Activated CD4-positive, alpha-beta T cell treated with anti-CD3 and anti-CD28 coated beads, Interleukin-2, amount 10 ng/mL, durations not matched to agents 24 days and 14 days (primary cell): ENCODE measurements at regions of chr18 and their contacts with region 1.

Region 1: DNA sequence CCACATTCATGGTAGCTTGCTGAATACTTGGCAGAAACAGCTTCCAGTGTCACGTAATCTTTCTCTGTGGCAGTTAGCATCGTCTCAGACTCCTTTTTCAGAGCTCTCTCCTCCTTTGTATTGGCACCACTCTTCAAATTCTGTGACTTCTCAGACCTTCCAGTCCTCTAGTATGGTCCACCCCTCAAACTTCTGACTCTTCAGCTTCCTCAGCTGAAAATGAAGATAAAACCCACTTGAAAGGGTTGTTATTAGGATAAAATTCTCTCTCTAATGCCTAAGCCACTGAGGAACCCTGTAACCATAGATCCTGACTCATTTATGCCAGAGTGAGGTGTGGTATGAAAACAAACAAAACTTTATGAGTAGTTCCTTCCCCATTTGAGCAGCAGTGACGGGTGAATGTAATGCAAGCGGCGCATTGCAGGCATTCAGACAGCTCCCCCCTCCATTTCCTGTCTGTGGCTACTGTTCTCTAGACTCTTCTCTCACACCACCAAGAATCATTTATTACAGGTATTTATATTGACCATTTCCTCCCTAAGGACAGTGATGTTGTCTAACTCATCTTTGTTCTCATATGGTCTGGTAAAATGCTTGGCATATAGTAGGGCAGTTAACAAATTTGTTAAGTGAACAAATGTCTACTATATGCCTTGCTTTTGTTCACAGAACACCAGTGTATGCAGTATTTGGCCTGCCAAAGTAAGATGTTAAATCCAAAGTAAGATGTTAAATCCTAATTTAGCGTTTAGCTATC is 35.3 kb downstream of the GALNT1 start:
- DNase-seq: peak; percentile 85
- H3K4me3 Mint-ChIP-seq: no peak overlapping the region
- H3K27ac Mint-ChIP-seq: no peak overlapping the region
- H3K4me1 Mint-ChIP-seq: peaks cover 2% of the 10 kb centered on the region
- H3K27me3 Mint-ChIP-seq: no peaks in the 10 kb centered on the region

Region 2: GRCh38 chr18:35407871-35408481 is 208.9 kb before region 1 on chr18:
- intact Hi-C with region 1: loop called (anchors 5 kb)
- DNase-seq: peak; percentile 83
- H3K4me3 Mint-ChIP-seq: no peak overlapping the region
- H3K27ac Mint-ChIP-seq: no peak overlapping the region
- H3K4me1 Mint-ChIP-seq: peaks cover 12% of the 10 kb centered on the region
- H3K27me3 Mint-ChIP-seq: peaks cover 5% of the 10 kb centered on the region

Region 3: GRCh38 chr18:35484034-35484433 is 132.8 kb before region 1 on chr18:
- intact Hi-C with region 1: loop called (anchors 2 kb)
- DNase-seq: no peak
- H3K4me3 Mint-ChIP-seq: no peak overlapping the region
- H3K27ac Mint-ChIP-seq: peak overlapping the region; percentile 16
- H3K4me1 Mint-ChIP-seq: peaks cover 16% of the 10 kb centered on the region
- H3K27me3 Mint-ChIP-seq: no peaks in the 10 kb centered on the region

Region 4: DNA sequence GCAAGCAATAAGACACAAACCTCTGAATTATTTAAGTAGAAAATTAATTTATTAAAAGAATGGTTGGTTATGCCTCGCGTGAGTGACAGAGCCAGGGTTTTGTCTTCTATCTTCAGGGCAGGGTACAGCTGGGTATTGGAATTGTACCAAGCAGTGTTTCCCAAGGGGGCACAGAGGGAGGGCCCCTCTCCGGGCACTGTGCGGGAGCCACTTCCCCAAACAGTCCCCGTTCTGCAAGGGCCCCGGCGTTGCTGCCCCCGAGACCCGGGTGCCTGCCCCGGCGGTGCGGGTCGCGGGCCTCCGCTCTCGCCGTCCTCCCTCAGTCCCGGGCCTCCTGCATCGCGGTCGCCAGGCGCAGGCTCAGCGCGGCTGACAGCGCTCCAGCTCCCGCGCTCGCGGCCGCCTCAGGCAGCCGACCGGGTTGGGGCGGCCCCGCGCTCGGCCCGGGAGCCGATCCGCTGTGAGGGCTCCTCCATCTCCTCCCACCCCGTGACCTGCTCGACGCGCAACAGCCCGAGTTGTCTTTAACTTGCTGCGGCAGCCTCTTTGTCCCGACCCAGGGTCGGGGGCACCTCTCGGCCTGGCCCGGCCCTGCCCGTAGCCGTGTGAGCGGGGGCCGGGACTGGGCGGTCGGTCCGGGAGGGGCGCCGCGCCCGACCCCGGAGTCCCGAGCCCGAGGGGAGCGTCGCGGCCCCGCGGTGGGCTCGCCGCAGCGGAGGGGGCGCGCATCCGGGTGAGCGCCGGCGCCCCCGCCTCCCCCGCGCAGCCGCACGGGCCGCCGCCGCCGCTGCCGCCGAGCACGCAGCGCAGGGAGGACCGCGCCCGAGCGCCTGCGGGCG is 35.9 kb before region 1 on chr18:
- intact Hi-C with region 1: loop called (anchors 1 kb)
- DNase-seq: peak; percentile 86
- H3K4me3 Mint-ChIP-seq: peak overlapping the region; percentile 73
- H3K27ac Mint-ChIP-seq: peak overlapping the region; percentile 66
- H3K4me1 Mint-ChIP-seq: peaks cover 22% of the 10 kb centered on the region
- H3K27me3 Mint-ChIP-seq: peaks cover 12% of the 10 kb centered on the region

Region 5: GRCh38 chr18:36162981-36163380 is 546.1 kb after region 1 on chr18:
- intact Hi-C with region 1: no loop called
- DNase-seq: no peak
- H3K4me3 Mint-ChIP-seq: no peak overlapping the region
- H3K27ac Mint-ChIP-seq: no peak overlapping the region
- H3K4me1 Mint-ChIP-seq: peaks cover 5% of the 10 kb centered on the region
- H3K27me3 Mint-ChIP-seq: no peaks in the 10 kb centered on the region

Region 6: DNA sequence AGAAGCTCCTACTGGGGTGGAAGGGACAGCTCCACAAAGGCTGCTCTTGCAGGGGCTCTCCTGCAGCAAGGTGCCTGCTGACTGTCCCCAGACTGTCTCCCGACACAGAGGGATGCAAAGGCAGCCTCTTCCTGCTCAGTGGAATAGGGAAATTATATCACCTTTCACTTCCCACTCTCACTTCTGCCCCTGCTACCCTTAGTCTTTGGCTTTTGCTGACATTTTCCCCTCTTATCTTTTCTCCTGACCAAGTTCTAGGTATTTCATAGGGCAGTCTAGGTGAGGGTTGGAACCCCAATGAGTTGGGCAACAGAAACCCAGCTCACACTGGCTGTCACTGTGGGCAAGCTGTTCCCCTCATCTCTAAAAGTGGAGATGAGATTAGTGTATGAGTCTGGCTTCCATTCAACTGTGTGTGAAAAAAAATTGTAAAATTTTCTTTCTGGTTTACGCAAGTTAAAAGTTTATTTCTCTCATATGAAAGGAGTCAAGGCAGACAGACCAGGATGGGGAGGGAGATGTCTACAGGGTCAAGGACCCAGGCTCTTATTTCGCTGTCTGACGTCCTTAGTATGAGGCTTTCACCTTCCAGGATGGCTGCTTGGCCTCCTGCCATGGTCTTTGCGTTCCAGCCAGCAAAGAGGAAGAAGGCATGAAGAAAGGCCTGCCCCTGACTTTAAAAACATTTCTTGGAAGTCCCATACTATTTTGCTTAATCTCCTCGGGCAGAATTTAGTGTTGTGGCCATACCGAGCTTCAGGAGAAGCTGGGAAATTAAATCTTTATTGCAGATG is 562.9 kb after region 1 on chr18:
- intact Hi-C with region 1: no loop called
- DNase-seq: no peak
- H3K4me3 Mint-ChIP-seq: no peak overlapping the region
- H3K27ac Mint-ChIP-seq: no peak overlapping the region
- H3K4me1 Mint-ChIP-seq: peaks cover 10% of the 10 kb centered on the region
- H3K27me3 Mint-ChIP-seq: no peaks in the 10 kb centered on the region